ENCODE measurements at regions of chr17 and their contacts with region 1.

Region 1: DNA sequence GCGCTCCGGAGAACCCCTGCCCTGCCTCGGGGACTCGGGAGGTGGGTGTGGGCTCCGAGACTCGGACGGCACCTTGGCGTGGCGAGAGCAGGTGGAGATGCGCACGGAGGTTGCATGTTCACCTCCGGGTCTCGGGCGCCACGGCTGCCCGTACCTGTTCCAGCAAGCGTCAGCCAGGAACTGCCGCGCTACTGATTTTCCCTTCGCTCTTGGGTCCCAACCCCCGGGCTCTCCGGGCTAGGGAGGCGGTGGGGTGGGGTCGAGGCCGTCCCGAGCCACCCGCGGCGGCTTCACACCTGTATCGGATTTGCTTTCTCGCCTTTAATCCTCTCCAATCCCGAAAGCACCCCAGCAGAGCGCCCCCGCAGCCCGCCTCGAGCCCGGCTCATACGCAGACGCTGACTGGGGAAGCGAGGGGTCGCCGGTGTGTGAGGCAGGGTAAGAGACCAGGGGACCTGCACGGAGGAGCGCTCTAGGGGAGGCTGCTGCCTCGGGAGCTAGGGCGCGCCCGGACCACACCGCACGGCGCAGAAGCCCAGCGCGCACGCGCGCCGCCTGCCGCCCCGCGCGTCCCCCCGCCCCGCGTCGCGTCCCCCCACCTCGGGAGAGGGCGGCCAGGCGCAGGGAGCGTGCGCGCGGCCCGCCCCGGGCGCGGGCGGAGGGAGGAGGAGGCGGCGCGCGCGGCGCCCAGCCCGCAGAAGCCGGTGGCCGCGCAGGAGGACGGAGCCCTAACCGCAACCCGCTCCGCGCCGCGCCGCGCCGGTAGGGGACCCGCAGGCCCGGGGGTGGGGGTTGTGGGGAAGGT is at the start of gene DUSP14:
- DNase-seq: peak; percentile 52 to 90 (median 74)
- H3K4me3 ChIP-seq: peak within 1 kb of the TSS; percentile 70 to 100 (median 94)
- H3K27ac ChIP-seq: peak within 1 kb of the TSS; percentile 6 to 97 (median 88)
- H3K27me3 ChIP-seq: no peaks in the 10 kb centered on the region
- CTCF ChIP-seq: peak in 6 of 56 donors; percentile 1 to 14 (median 8)
- total RNA-seq, gene DUSP14: 9.8 to 30.5 (median 19.3) TPM

Region 2: GRCh38 chr17:36534840-36535668 is 954.3 kb before region 1 on chr17 and contains the starts of genes MYO19 and PIGW:
- intact Hi-C with region 1: loop called in 1 of 2 experiments (anchors 5 kb)
- DNase-seq: peak; percentile 71 to 93 (median 82)
- H3K4me3 ChIP-seq: peak within 1 kb of the TSS; percentile 67 to 99 (median 92)
- H3K27ac ChIP-seq: peak within 1 kb of the TSS; percentile 11 to 97 (median 89)
- H3K27me3 ChIP-seq: no peaks in the 10 kb centered on the region
- CTCF ChIP-seq: peak in 41 of 56 donors; percentile 13 to 61 (median 37)
- total RNA-seq, gene MYO19: 24.1 to 75.5 (median 48.2) TPM
- total RNA-seq, gene PIGW: 1.5 to 8.5 (median 4.2) TPM

Region 3: GRCh38 chr17:37406635-37407461 is 82.6 kb before region 1 on chr17 and contains the starts of genes ACACA and TADA2A:
- intact Hi-C with region 1: loop called (anchors 2 kb)
- DNase-seq: peak; percentile 41 to 84 (median 61)
- H3K4me3 ChIP-seq: peak within 1 kb of the TSS; percentile 55 to 97 (median 86)
- H3K27ac ChIP-seq: peak within 1 kb of the TSS; percentile 50 to 95 (median 87)
- H3K27me3 ChIP-seq: no peaks in the 10 kb centered on the region
- CTCF ChIP-seq: peak in 3 of 56 donors; percentile 9 to 18 (median 16)
- total RNA-seq, gene ACACA: 102 to 193 (median 140) TPM
- total RNA-seq, gene TADA2A: 36.4 to 61.6 (median 47.8) TPM

Region 4: DNA sequence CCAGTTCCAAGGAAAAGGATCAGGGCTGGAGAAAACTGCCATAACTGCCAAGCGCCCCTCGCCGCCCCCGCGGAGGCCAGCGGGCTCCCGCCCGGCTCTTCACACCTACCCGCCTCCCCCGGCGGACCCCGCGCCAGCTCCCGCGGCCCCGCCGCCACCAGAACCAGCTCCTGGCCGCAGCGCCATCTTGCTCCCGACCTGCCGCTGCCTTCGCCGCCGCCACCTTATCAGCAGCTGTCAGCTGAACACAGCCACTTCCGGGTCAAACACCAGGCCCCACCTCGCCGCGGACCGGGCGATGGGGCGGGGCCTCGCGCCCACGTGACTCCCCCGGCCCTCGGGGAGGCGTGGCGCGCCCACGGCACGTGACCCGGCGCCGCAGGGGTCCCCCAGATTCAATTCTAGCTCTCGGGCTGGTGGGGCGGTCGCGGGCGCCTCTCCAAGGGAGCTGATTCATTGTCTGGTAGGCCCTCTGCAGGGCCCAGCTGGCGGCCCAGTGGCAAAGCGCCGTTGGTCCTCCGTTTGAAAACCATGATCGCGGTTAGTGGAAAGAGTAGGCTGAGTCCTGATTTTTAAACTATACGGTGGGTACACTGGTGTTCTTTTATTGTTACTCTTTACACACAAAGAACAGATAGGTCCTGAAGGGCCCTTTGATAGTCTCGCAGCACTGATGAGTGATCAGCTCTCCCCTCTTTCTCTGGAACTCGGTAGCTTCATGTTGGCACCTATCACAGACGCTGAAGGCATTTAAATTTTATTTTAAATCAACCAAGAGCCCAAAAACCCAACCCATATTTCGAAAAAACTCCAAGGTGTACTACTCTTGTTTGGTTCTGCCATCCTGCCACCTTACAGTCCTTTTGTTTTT is 120.0 kb after region 1 on chr17 and contains the start of gene SYNRG:
- intact Hi-C with region 1: loop called (anchors 2 kb)
- DNase-seq: peak; percentile 94 to 99 (median 98)
- H3K4me3 ChIP-seq: peak within 1 kb of the TSS; percentile 62 to 100 (median 94)
- H3K27ac ChIP-seq: peak within 1 kb of the TSS; percentile 70 to 99 (median 93)
- H3K27me3 ChIP-seq: no peaks in the 10 kb centered on the region
- CTCF ChIP-seq: peak in 54 of 56 donors; percentile 32 to 77 (median 59)
- total RNA-seq, gene SYNRG: 40.6 to 67.2 (median 51.6) TPM

Measured in dorsolateral prefrontal cortex (tissue), 120 donors.